Caco-2 (cell line): ENCODE measurements at regions of chr2 and their contacts with region 1.

Region 1: DNA sequence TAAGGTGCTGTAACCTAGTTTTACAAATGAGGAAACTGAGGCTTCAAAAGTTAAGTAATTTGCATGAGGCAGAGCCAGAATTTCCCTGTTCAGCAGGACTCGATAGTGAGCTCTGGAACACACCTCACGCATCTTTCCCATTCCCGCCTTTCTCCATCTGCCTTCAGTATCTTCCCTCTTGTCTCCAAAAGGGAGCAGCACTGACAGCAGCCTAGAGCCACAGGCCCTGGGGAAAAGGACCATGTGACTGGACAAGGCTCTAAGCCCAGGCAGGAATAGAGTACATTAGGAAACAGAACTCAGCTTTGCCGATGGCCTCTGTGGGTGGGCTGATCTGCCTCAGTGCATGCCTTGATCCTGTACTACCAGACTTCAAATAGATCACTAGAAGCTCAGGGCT is 21.5 kb downstream of the GPR155 start:
- DNase-seq: peak; percentile 60 to 76
- H3K4me3 ChIP-seq: no peak overlapping the region
- H3K4me3 Mint-ChIP-seq: no peak overlapping the region
- H3K27ac Mint-ChIP-seq: no peak overlapping the region
- H3K4me1 ChIP-seq: no peaks in the 10 kb centered on the region
- H3K4me1 Mint-ChIP-seq: peaks cover 7% of the 10 kb centered on the region
- H3K27me3 ChIP-seq: no peaks in the 10 kb centered on the region
- H3K27me3 Mint-ChIP-seq: peaks cover 4% of the 10 kb centered on the region
- CTCF ChIP-seq: peak in 1 of 2 experiments; percentile 26

Region 2: GRCh38 chr2:174487108-174487819 is 21.9 kb after region 1 on chr2:
- CTCF ChIA-PET with region 1: interaction called, 7 read pairs
- POLR2A ChIA-PET with region 1: no interaction called
- intact Hi-C with region 1: loop called (anchors 2 kb)
- DNase-seq: peak; percentile 97 to 100
- H3K4me3 ChIP-seq: peak overlapping the region; percentile 94
- H3K4me3 Mint-ChIP-seq: peak overlapping the region; percentile 84
- H3K27ac Mint-ChIP-seq: peak overlapping the region; percentile 74
- H3K4me1 ChIP-seq: peaks cover 14% of the 10 kb centered on the region
- H3K4me1 Mint-ChIP-seq: peaks cover 4% of the 10 kb centered on the region
- H3K27me3 ChIP-seq: no peaks in the 10 kb centered on the region
- H3K27me3 Mint-ChIP-seq: peaks cover 12% of the 10 kb centered on the region
- CTCF ChIP-seq: no peak

Region 3: DNA sequence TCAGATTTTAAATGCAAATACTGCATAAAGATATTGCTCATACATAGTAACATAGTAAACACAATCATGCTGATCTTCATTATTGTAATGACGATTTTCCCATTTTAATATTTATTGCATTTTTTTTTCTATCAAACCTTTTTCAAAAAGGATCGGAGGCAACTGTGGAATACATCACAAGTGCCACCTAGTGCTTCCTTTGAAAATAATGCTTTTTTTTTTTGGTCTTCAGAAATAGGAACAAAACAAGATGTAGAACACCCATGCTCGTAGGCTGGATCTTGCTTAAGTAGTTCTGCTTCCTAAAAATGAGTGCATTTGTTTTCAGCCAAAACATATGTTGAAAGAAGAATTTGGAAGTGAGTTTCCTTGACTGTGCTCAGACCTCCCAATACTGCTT is 57.2 kb after region 1 on chr2:
- CTCF ChIA-PET with region 1: no interaction called
- POLR2A ChIA-PET with region 1: no interaction called
- intact Hi-C with region 1: loop called (anchors 1 kb)
- DNase-seq: no peak
- H3K4me3 ChIP-seq: no peak overlapping the region
- H3K4me3 Mint-ChIP-seq: no peak overlapping the region
- H3K27ac Mint-ChIP-seq: no peak overlapping the region
- H3K4me1 ChIP-seq: no peaks in the 10 kb centered on the region
- H3K4me1 Mint-ChIP-seq: peaks cover 7% of the 10 kb centered on the region
- H3K27me3 ChIP-seq: no peaks in the 10 kb centered on the region
- H3K27me3 Mint-ChIP-seq: peaks cover 4% of the 10 kb centered on the region
- CTCF ChIP-seq: peak; percentile 26 to 30

Region 4: DNA sequence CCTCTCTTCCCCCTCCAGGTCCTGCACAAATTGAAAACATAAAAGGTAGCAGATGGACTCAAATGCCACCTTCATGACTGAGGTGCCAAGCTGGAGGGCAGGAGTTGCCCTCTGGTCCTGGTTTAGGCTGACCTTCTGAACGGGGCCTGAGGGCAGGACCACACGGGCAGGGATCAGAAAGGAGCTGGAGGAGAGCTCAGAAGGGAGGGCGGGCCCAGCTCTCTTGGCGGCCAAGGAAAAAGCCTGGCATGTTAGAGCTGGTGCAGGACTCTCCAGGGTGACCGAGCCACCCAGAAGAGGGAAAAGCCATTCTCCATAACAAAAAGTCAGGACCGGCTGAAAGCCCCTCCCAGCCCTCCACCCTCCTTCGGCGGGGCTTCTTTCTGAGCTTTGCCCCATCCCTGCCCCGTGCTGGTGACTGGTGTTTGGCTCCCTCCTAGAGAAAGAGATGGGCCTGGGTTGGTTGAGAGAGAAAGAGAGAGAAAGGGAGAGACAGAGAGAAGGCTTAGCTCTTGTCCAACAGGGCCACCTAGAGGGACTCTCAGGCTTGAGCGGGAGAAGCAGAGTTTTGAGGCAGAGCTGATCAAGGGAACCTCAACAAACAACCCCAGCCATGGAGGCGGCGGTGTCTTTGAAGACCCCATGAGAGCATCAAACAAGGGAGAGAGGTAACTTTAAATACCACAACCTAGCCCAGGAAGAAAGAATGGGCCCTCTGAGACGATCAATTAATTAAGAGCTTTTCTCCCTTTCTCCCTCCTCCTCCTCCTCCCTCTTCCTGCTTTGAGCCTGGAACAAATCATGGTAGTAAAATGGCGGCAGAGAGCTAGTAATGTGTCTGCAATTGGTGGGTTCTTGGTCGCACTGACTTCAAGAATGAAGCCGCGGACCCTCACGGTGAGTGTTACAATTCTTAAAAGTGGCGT is 81.5 kb after region 1 on chr2:
- CTCF ChIA-PET with region 1: interaction called, 114 read pairs
- POLR2A ChIA-PET with region 1: interaction called, 7 read pairs
- intact Hi-C with region 1: loop called (anchors 1 kb)
- DNase-seq: peak; percentile 84 to 88
- H3K4me3 ChIP-seq: peak overlapping the region; percentile 54
- H3K4me3 Mint-ChIP-seq: peak overlapping the region; percentile 96
- H3K27ac Mint-ChIP-seq: peak overlapping the region; percentile 98
- H3K4me1 ChIP-seq: peaks cover 22% of the 10 kb centered on the region
- H3K4me1 Mint-ChIP-seq: peaks cover 7% of the 10 kb centered on the region
- H3K27me3 ChIP-seq: no peaks in the 10 kb centered on the region
- H3K27me3 Mint-ChIP-seq: no peaks in the 10 kb centered on the region
- CTCF ChIP-seq: peak; percentile 70 to 85

Region 5: GRCh38 chr2:174603280-174603679 is 138.0 kb after region 1 on chr2:
- CTCF ChIA-PET with region 1: interaction called, 4 read pairs
- POLR2A ChIA-PET with region 1: no interaction called
- intact Hi-C with region 1: loop called (anchors 2 kb)
- DNase-seq: peak; percentile 43 to 49
- H3K4me3 ChIP-seq: no peak overlapping the region
- H3K4me3 Mint-ChIP-seq: no peak overlapping the region
- H3K27ac Mint-ChIP-seq: no peak overlapping the region
- H3K4me1 ChIP-seq: no peaks in the 10 kb centered on the region
- H3K4me1 Mint-ChIP-seq: no peaks in the 10 kb centered on the region
- H3K27me3 ChIP-seq: no peaks in the 10 kb centered on the region
- H3K27me3 Mint-ChIP-seq: no peaks in the 10 kb centered on the region
- CTCF ChIP-seq: peak; percentile 53 to 59

Region 6: GRCh38 chr2:174682578-174683391 is 217.5 kb after region 1 on chr2:
- CTCF ChIA-PET with region 1: interaction called, 4 read pairs
- POLR2A ChIA-PET with region 1: no interaction called
- intact Hi-C with region 1: loop called (anchors 2 kb)
- DNase-seq: peak in 1 of 2 experiments; percentile 58
- H3K4me3 ChIP-seq: peak overlapping the region; percentile 60
- H3K4me3 Mint-ChIP-seq: peak overlapping the region; percentile 85
- H3K27ac Mint-ChIP-seq: peak overlapping the region; percentile 40
- H3K4me1 ChIP-seq: 0 out of 2 replicates have a peak, but pooled peaks cover 11% of the 10 kb centered on the region
- H3K4me1 Mint-ChIP-seq: peaks cover 15% of the 10 kb centered on the region
- H3K27me3 ChIP-seq: no peaks in the 10 kb centered on the region; the same call in 1 of the 2 replicates
- H3K27me3 Mint-ChIP-seq: peaks cover 9% of the 10 kb centered on the region
- CTCF ChIP-seq: no peak

Region 7: GRCh38 chr2:174697255-174697654 is 231.9 kb after region 1 on chr2:
- CTCF ChIA-PET with region 1: no interaction called
- POLR2A ChIA-PET with region 1: no interaction called
- intact Hi-C with region 1: loop called (anchors 2 kb)
- DNase-seq: peak; percentile 71 to 77
- H3K4me3 ChIP-seq: no peak overlapping the region
- H3K4me3 Mint-ChIP-seq: no peak overlapping the region
- H3K27ac Mint-ChIP-seq: no peak overlapping the region
- H3K4me1 ChIP-seq: peaks cover 6% of the 10 kb centered on the region; the same call in 1 of the 2 replicates
- H3K4me1 Mint-ChIP-seq: peaks cover 6% of the 10 kb centered on the region
- H3K27me3 ChIP-seq: no peaks in the 10 kb centered on the region
- H3K27me3 Mint-ChIP-seq: no peaks in the 10 kb centered on the region
- CTCF ChIP-seq: peak; percentile 71 to 93